WTC11 (cell line): ENCODE measurements at regions of chr11 and their contacts with region 1.

Region 1: DNA sequence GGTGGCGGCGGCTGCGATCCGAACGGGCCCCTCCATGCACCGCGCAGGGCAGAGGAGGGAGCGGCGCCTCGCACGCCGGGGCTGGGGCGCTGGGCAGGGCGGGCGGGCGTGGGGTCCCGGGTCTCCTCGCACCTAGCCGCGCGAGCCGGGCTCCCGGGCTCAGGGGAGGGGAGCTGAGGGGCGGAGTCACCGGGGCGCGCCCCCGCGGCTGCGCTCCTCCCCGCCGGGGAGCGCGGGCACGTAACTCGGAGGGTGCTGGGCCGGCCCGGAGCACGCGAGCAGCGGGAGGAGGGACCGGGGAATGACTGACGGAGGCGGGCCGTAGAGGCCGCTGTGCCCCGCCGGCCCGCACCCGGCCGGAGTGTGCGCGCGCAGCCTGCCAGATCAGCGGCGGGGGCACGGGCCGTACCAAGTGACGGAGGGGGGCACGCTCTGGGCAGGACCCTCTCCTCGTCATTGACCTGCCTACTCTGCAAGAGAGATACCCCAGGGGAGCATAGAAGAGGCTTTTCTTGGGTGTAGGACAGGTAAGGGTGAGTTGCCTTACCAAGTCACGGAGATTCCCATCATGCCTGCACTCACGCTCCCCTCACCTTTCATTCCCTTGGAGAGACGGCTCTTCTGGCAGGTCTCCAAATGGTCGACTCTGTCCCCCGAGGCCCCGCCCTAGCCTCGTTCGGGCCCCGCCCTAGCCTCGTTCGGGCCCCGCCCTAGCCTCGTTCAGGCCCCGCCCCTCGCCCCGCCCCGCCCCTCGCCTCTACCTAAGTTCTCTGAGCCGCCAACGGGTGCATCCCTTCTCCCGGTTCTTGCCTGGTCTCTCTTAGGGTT is at the start of gene CDON:
- DNase-seq: peak; percentile 91
- ATAC-seq: peak; percentile 93
- H3K4me3 Mint-ChIP-seq: peak within 1 kb of the TSS; percentile 85
- H3K27ac Mint-ChIP-seq: peak within 1 kb of the TSS; percentile 99
- H3K4me1 Mint-ChIP-seq: peaks cover 29% of the 10 kb centered on the region
- H3K27me3 Mint-ChIP-seq: no peaks in the 10 kb centered on the region
- CTCF ChIP-seq: no peak
- total RNA-seq, gene CDON: 33.0 to 34.1 TPM (median 33.3 TPM) in 3 replicates

Region 2: DNA sequence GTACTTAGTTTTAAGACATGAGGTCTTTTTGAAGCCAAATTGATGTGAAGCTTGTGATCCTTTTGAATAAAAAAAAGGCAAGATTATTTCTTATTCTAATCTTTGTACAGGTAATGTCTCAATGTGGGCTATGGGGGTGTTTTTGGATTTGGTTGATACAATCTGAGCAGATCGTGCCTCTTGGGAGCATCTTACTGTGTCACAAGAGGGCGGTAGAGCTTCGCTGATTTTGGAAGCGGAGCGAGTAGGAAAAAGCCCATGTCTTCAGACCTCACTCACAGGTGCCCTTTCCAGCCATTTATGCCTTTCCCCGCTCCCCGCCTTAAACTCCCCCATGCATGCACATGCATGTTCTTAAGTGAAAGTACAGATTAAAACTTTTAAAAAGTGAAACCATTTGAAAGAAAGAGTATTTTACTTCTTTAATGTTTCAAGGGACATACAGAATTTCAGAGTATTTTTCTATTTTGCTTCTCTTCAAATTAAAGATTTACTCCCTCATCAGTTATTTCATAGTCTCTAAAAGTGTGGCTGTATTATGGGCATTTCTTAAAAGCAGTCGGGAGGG is 139.8 kb before region 1 on chr11:
- CTCF ChIA-PET with region 1: interaction called, 11 read pairs
- POLR2A ChIA-PET with region 1: no interaction called
- DNase-seq: peak; percentile 71
- ATAC-seq: peak; percentile 85
- H3K4me3 Mint-ChIP-seq: no peak overlapping the region
- H3K27ac Mint-ChIP-seq: no peak overlapping the region
- H3K4me1 Mint-ChIP-seq: peaks cover 8% of the 10 kb centered on the region; the same call in 1 of the 2 replicates
- H3K27me3 Mint-ChIP-seq: no peaks in the 10 kb centered on the region
- CTCF ChIP-seq: peak; percentile 44; the same call in 1 of the 2 replicates

Region 3: DNA sequence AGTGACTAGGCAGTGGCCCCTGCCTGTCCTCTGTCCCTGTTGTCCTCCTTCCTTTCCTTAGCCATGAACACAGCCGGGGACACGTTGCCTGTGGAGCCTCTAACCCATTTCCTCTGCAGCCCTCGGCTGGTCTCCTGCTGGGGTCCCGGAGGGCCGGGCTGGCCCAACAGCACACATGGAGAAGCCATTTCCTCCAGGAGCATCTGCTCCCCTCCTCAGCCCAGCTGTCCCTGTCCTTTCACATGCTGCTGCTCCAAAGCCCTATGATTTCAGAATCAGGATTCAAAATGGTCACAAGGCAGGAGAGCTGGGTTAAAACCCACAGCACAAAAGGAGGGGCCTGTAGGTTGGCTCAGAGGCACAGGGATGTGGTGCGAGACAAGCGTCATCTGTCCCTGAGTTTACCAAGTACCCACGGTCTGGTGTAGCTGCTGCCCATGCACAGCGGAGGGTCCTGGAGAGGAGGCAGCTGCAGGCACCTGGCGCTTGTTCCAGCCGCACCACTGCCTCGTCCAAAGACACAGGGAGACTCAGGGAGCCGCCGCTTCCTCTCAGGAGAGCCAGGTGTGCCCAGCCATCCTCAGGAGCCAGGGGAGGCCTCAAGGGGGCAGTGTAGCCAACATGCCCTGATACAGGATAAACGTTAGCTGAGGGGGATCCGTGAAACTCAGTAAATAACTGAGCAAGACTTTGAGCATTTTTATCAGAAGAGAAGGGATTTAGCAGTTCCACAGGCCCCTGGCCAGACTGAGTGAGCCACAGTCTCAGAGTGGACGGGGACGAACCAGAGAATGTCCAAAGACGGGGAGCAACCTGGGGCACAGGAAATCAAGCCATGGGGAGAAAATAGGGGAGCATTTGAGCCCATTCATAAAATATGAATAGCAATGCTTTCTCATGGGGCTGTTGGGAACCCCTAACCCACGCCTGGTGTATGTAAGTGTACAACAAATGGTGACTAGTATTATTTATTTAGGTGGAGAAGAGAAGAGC is 121.0 kb before region 1 on chr11:
- CTCF ChIA-PET with region 1: interaction called, 28 read pairs
- POLR2A ChIA-PET with region 1: no interaction called
- DNase-seq: peak; percentile 91
- ATAC-seq: peak; percentile 92
- H3K4me3 Mint-ChIP-seq: no peak overlapping the region
- H3K27ac Mint-ChIP-seq: peak overlapping the region; percentile 45
- H3K4me1 Mint-ChIP-seq: peaks cover 23% of the 10 kb centered on the region
- H3K27me3 Mint-ChIP-seq: no peaks in the 10 kb centered on the region; the same call in 1 of the 2 replicates
- CTCF ChIP-seq: peak; percentile 68

Region 4: GRCh38 chr11:126080161-126080941 is 17.5 kb after region 1 on chr11:
- CTCF ChIA-PET with region 1: interaction called, 30 read pairs
- POLR2A ChIA-PET with region 1: no interaction called
- DNase-seq: no peak
- ATAC-seq: peak; percentile 8; the same call in 1 of the 2 replicates
- H3K4me3 Mint-ChIP-seq: no peak overlapping the region
- H3K27ac Mint-ChIP-seq: peak overlapping the region; percentile 65
- H3K4me1 Mint-ChIP-seq: peaks cover 66% of the 10 kb centered on the region
- H3K27me3 Mint-ChIP-seq: peaks cover 7% of the 10 kb centered on the region; the same call in 1 of the 2 replicates
- CTCF ChIP-seq: no peak

Region 5: GRCh38 chr11:126160345-126161022 is 97.6 kb after region 1 on chr11:
- CTCF ChIA-PET with region 1: interaction called, 10 read pairs
- POLR2A ChIA-PET with region 1: no interaction called
- DNase-seq: no peak
- ATAC-seq: peak; percentile 25
- H3K4me3 Mint-ChIP-seq: no peak overlapping the region
- H3K27ac Mint-ChIP-seq: no peak overlapping the region
- H3K4me1 Mint-ChIP-seq: peaks cover 12% of the 10 kb centered on the region
- H3K27me3 Mint-ChIP-seq: peaks cover 5% of the 10 kb centered on the region; the same call in 1 of the 2 replicates
- CTCF ChIP-seq: no peak

Region 6: DNA sequence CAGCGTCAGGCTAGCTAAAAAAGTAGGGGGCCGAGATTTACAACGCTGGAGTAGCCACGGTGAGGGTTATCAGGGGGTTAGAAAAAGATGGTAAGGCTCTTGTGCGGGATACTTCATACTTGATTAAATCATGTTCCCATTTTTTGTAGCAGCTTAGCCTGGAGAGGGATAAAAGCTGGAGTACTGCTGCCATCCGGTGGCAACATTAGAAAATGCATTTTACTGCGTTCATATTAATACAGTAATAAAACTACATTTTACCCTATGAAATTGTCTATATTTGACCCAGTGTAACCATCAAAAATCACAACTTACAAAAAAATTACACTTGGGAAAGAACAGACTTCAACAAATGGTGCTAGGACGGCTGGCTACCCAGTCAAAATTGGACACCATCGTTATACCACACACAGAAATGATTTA is 131.2 kb after region 1 on chr11:
- CTCF ChIA-PET with region 1: interaction called, 11 read pairs
- POLR2A ChIA-PET with region 1: no interaction called
- DNase-seq: peak; percentile 35
- ATAC-seq: peak; percentile 58
- H3K4me3 Mint-ChIP-seq: no peak overlapping the region
- H3K27ac Mint-ChIP-seq: no peak overlapping the region
- H3K4me1 Mint-ChIP-seq: no peaks in the 10 kb centered on the region
- H3K27me3 Mint-ChIP-seq: no peaks in the 10 kb centered on the region
- CTCF ChIP-seq: peak; percentile 38

Region 7: GRCh38 chr11:126257764-126258163 is 194.9 kb after region 1 on chr11:
- CTCF ChIA-PET with region 1: no interaction called
- POLR2A ChIA-PET with region 1: no interaction called
- DNase-seq: no peak
- ATAC-seq: no peak
- H3K4me3 Mint-ChIP-seq: no peak overlapping the region
- H3K27ac Mint-ChIP-seq: no peak overlapping the region
- H3K4me1 Mint-ChIP-seq: no peaks in the 10 kb centered on the region
- H3K27me3 Mint-ChIP-seq: no peaks in the 10 kb centered on the region
- CTCF ChIP-seq: no peak